Caco-2 (cell line): ENCODE measurements at regions of chr14 and their contacts with region 1.

Region 1: GRCh38 chr14:25308244-25308643 is 258.3 kb upstream of the STXBP6 start:
- DNase-seq: peak in 1 of 2 experiments; percentile 8
- H3K4me3 ChIP-seq: no peak overlapping the region
- H3K4me3 Mint-ChIP-seq: no peak overlapping the region
- H3K27ac Mint-ChIP-seq: no peak overlapping the region
- H3K4me1 ChIP-seq: no peaks in the 10 kb centered on the region
- H3K4me1 Mint-ChIP-seq: no peaks in the 10 kb centered on the region
- H3K27me3 ChIP-seq: no peaks in the 10 kb centered on the region
- H3K27me3 Mint-ChIP-seq: peaks cover 9% of the 10 kb centered on the region
- CTCF ChIP-seq: peak in 1 of 2 experiments; percentile 10

Region 2: GRCh38 chr14:24565766-24566165 is 742.5 kb before region 1 on chr14:
- CTCF ChIA-PET with region 1: no interaction called
- POLR2A ChIA-PET with region 1: no interaction called
- intact Hi-C with region 1: no loop called
- DNase-seq: no peak
- H3K4me3 ChIP-seq: no peak overlapping the region
- H3K4me3 Mint-ChIP-seq: no peak overlapping the region
- H3K27ac Mint-ChIP-seq: no peak overlapping the region
- H3K4me1 ChIP-seq: peaks cover 6% of the 10 kb centered on the region
- H3K4me1 Mint-ChIP-seq: peaks cover 7% of the 10 kb centered on the region
- H3K27me3 ChIP-seq: no peaks in the 10 kb centered on the region
- H3K27me3 Mint-ChIP-seq: peaks cover 8% of the 10 kb centered on the region
- CTCF ChIP-seq: no peak

Region 3: GRCh38 chr14:25406818-25407217 is 98.6 kb after region 1 on chr14:
- CTCF ChIA-PET with region 1: no interaction called
- POLR2A ChIA-PET with region 1: no interaction called
- intact Hi-C with region 1: loop called (anchors 5 kb)
- DNase-seq: peak; percentile 34 to 44
- H3K4me3 ChIP-seq: no peak overlapping the region
- H3K4me3 Mint-ChIP-seq: no peak overlapping the region
- H3K27ac Mint-ChIP-seq: no peak overlapping the region
- H3K4me1 ChIP-seq: no peaks in the 10 kb centered on the region
- H3K4me1 Mint-ChIP-seq: no peaks in the 10 kb centered on the region
- H3K27me3 ChIP-seq: no peaks in the 10 kb centered on the region
- H3K27me3 Mint-ChIP-seq: peaks cover 10% of the 10 kb centered on the region
- CTCF ChIP-seq: peak; percentile 55

Region 4: GRCh38 chr14:25537846-25538455 is 229.7 kb after region 1 on chr14:
- CTCF ChIA-PET with region 1: no interaction called
- POLR2A ChIA-PET with region 1: no interaction called
- intact Hi-C with region 1: no loop called
- DNase-seq: peak; percentile 57 to 71
- H3K4me3 ChIP-seq: no peak overlapping the region
- H3K4me3 Mint-ChIP-seq: no peak overlapping the region
- H3K27ac Mint-ChIP-seq: no peak overlapping the region
- H3K4me1 ChIP-seq: no peaks in the 10 kb centered on the region
- H3K4me1 Mint-ChIP-seq: no peaks in the 10 kb centered on the region
- H3K27me3 ChIP-seq: no peaks in the 10 kb centered on the region; the same call in 1 of the 2 replicates
- H3K27me3 Mint-ChIP-seq: peaks cover 11% of the 10 kb centered on the region
- CTCF ChIP-seq: peak; percentile 63 to 87